Activated B cell treated with CpG ODN at 0.5 μM for 24 hours (primary cell): ENCODE measurements at regions of chr5 and their contacts with region 1.

Region 1: DNA sequence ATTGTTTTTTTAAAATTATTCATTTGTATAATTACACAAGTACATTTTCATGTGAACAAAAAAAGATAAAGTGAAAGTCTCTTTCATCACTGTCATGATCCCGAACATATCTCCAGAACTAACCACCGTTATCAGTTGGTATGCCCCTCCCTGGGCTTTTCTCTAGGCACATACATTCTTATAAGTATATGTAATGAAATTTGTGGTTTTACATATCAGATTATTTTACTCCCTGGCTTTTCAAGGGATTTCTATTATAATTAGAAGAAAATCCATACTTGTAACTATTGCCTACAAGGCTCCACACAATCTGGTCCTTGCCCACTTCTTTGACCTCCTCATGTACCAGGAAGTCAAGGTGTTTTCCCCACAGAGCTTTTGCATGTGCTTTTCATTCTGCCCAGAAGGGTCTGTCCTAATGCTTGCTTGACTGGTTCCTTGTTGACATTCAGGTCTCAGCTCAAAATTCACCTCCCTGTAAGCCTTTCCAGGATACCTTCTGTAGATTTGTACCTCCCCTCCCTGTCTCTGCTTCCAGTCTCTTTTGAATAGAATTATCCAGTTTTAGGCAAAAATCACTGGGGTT is 33.7 kb upstream of the HSD17B4 start:
- DNase-seq: no peak
- ATAC-seq: peak; percentile 66
- H3K4me3 Mint-ChIP-seq: peak overlapping the region; percentile 63
- H3K27ac Mint-ChIP-seq: peak overlapping the region; percentile 89
- H3K4me1 Mint-ChIP-seq: peaks cover 81% of the 10 kb centered on the region
- H3K27me3 Mint-ChIP-seq: no peaks in the 10 kb centered on the region
- CTCF ChIP-seq: no peak

Region 2: GRCh38 chr5:119435436-119436132 is 17.0 kb after region 1 on chr5:
- CTCF ChIA-PET with region 1: interaction called, 55 read pairs
- POLR2A ChIA-PET with region 1: interaction called, 4 read pairs
- intact Hi-C with region 1: loop called (anchors 1 kb)
- DNase-seq: peak; percentile 73
- ATAC-seq: peak; percentile 93
- H3K4me3 Mint-ChIP-seq: peak overlapping the region; percentile 29
- H3K27ac Mint-ChIP-seq: peak overlapping the region; percentile 19
- H3K4me1 Mint-ChIP-seq: peaks cover 32% of the 10 kb centered on the region
- H3K27me3 Mint-ChIP-seq: no peaks in the 10 kb centered on the region
- CTCF ChIP-seq: peak; percentile 81

Region 3: GRCh38 chr5:119452373-119453039 is 33.9 kb after region 1 on chr5 and contains the start of gene HSD17B4:
- CTCF ChIA-PET with region 1: interaction called, 3 read pairs
- POLR2A ChIA-PET with region 1: no interaction called
- intact Hi-C with region 1: loop called (anchors 1 kb)
- DNase-seq: peak; percentile 76
- ATAC-seq: peak; percentile 95
- H3K4me3 Mint-ChIP-seq: peak within 1 kb of the TSS; percentile 95
- H3K27ac Mint-ChIP-seq: peak within 1 kb of the TSS; percentile 95
- H3K4me1 Mint-ChIP-seq: peaks cover 53% of the 10 kb centered on the region
- H3K27me3 Mint-ChIP-seq: no peaks in the 10 kb centered on the region
- CTCF ChIP-seq: no peak
- total RNA-seq, gene HSD17B4: 106 and 130 TPM in 2 replicates